CD8-positive, alpha-beta T cell (primary cell): ENCODE measurements at regions of chr5 and their contacts with region 1.

Region 1: GRCh38 chr5:173563252-173563651 is 53.2 kb downstream of the BOD1 start:
- DNase-seq: no peak
- ATAC-seq: no peak
- H3K4me3 ChIP-seq: no peak overlapping the region
- H3K4me3 Mint-ChIP-seq: no peak overlapping the region
- H3K27ac ChIP-seq: no peak overlapping the region
- H3K27ac Mint-ChIP-seq: no peak overlapping the region
- H3K4me1 ChIP-seq: no peaks in the 10 kb centered on the region
- H3K4me1 Mint-ChIP-seq: no peaks in the 10 kb centered on the region
- H3K27me3 ChIP-seq: no peaks in the 10 kb centered on the region
- H3K27me3 Mint-ChIP-seq: peaks cover 25% of the 10 kb centered on the region
- CTCF ChIP-seq: no peak

Region 2: DNA sequence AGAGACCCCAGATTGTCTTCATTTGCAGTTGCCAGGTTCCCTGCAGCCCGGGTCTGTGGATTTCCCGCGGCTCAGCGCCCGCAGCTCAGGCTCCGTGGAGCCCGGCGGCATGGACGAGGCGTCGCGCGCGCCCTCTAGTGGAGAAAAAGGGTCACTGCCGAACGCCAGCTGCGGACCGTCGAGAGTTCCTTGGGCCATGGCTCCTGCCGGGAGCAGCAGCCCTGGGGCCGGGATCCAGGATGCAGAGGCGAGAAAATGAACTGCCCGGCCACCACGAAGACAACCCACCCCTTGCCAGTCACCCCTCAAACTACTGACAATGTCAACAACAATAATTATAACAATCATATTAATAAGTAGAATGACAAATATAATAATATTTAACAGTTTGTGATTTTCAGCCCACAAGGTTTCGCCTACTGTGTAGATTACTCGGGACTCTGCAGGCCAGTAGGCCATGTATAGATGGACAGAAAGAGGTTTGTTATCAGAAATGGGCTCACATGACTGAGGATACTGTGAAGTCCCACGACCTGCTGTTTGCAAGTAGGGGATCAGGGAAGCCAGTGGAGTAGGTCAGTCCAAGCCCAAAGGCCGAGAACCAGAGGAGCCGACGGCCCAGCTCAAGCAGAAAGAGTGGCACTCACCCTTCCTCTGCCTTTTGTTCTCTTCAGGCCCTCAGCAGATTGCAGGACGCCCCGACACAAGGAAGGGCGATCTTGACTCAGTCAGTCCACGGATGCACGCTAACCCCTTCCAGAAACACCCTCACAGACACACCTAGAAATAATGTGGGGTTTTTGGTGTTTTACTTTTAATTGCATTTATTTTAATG is 10.1 kb after region 1 on chr5:
- CTCF ChIA-PET with region 1: interaction called, 13 read pairs
- POLR2A ChIA-PET with region 1: no interaction called
- intact Hi-C with region 1: no loop called
- DNase-seq: peak; percentile 39 to 78 (median 64)
- ATAC-seq: peak; percentile 48
- H3K4me3 ChIP-seq: no peak overlapping the region
- H3K4me3 Mint-ChIP-seq: no peak overlapping the region
- H3K27ac ChIP-seq: no peak overlapping the region
- H3K27ac Mint-ChIP-seq: no peak overlapping the region
- H3K4me1 ChIP-seq: peaks cover 4% of the 10 kb centered on the region
- H3K4me1 Mint-ChIP-seq: peaks cover 7% of the 10 kb centered on the region
- H3K27me3 ChIP-seq: peaks cover 5 to 6% of the 10 kb centered on the region in 2 experiments
- H3K27me3 Mint-ChIP-seq: peaks cover 26% of the 10 kb centered on the region
- CTCF ChIP-seq: peak; percentile 94

Region 3: GRCh38 chr5:173598686-173599085 is 35.4 kb after region 1 on chr5:
- CTCF ChIA-PET with region 1: no interaction called
- POLR2A ChIA-PET with region 1: no interaction called
- intact Hi-C with region 1: loop called in 1 of 2 experiments (anchors 1 kb)
- DNase-seq: no peak
- ATAC-seq: no peak
- H3K4me3 ChIP-seq: no peak overlapping the region
- H3K4me3 Mint-ChIP-seq: no peak overlapping the region
- H3K27ac ChIP-seq: no peak overlapping the region
- H3K27ac Mint-ChIP-seq: no peak overlapping the region
- H3K4me1 ChIP-seq: no peaks in the 10 kb centered on the region
- H3K4me1 Mint-ChIP-seq: peaks cover 3% of the 10 kb centered on the region
- H3K27me3 ChIP-seq: no peaks in the 10 kb centered on the region
- H3K27me3 Mint-ChIP-seq: no peaks in the 10 kb centered on the region
- CTCF ChIP-seq: no peak